Posterior cingulate gyrus (tissue), 11 donors: ENCODE measurements at regions of chr13 and their contacts with region 1.

Region 1: GRCh38 chr13:19633479-19634255 is at the start of gene MPHOSPH8:
- DNase-seq: peak; percentile 91 to 98 (median 92)

Region 2: DNA sequence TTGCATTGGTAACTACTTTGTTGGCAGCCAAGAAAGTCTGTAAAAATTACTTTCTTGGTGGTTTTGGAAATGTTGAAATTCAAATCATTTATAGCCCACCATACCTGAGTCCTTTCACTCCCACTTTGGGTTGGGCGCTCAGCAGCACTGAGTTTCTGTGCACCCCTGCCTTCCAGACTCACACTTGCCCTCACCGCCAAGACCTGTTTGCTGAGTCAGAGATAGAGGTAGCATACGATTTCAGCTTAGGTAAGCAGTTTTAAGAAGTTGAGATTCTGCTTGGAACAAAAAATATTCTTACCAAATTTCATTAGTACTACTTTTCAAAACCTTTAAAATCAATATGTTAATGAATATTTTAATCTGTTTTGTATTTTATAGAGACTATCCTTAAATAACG is 12.4 kb after region 1 on chr13:
- intact Hi-C with region 1: no loop called
- DNase-seq: peak in 1 of 10 donors; percentile 61

Region 3: DNA sequence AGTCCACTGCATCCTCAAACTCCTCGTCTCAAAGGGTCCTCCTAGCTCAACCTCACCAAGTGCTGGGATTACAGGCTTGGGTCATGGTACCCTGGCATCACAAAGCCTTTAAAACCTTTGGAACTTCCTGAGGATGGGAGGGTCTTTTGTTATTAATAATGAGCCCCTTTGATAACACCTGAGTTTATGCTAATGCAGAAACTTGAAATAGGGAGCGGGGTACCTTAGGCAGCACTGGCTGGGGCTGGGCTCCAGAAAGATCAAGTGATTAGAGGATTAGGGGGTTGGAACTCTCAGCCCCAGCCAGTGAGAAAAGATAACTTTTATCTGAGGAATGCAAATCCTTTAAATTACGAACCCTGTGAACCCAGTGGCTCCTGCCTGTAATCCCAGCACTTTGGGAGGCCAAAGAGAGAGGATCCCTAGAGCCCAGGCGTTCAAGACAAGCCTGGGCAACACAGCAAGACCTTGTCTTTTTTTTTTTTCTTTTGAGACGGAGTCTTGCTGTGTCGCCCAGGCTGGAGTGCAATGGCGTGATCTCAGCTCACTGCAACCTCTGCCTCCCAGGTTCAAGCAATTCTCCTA is 158.4 kb after region 1 on chr13:
- intact Hi-C with region 1: no loop called
- DNase-seq: peak in 3 of 10 donors; percentile 7 to 33 (median 8)

Region 4: DNA sequence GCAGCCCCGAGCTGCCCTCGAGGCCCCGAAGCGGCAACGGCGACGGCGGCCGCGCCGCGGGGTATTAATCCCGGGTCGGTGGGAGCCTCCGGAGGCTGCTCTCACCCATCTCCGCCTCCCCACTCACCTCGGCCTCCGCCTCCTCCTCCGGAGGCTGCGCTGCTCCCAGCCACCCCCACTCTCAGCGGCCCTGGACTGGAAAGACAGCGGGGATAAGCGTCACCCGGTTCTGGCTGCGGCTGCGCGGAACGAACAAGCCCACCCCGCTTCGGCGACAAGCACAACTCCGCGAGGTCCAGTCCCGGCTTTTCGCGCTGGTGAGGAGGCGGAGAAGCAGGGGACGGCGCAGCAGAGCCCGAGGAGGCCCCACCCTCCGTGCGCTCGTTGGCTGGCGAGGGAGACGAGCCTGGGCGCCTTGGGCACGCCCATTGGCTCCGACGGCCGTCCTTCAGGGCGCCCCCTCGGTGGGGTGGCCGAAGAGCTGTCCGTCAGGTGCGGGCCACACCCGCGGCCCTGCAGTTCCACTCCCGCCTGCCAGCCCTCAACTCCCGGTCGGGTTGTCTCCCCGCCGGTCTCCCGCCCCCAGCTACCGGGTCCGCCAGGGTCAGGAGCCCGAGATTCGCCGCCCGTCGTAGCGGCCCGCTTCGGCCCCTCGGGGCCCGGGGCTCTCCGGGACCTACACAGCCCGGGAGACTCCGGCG is 229.8 kb after region 1 on chr13 and contains the start of gene ZMYM5:
- intact Hi-C with region 1: loop called (anchors 2 kb)
- DNase-seq: peak; percentile 98 to 100 (median 99)